ENCODE measurements at regions of chr17 and their contacts with region 1.

Region 1: GRCh38 chr17:78665952-78666920 is 89.0 kb upstream of the DNAH17 start:
- DNase-seq: peak; percentile 79 to 91 (median 87)
- H3K4me3 ChIP-seq: peak overlapping the region in 1 of 3 experiments; percentile 41
- H3K4me3 Mint-ChIP-seq: peak overlapping the region; percentile 52 to 74
- H3K27ac ChIP-seq: peak overlapping the region; percentile 77 to 84
- H3K27ac Mint-ChIP-seq: peak overlapping the region; percentile 83 to 97 (median 91)
- H3K4me1 ChIP-seq: peaks cover 29 to 31% of the 10 kb centered on the region in 2 donors
- H3K4me1 Mint-ChIP-seq: peaks cover 27% of the 10 kb centered on the region
- H3K27me3 ChIP-seq: no peaks in the 10 kb centered on the region
- H3K27me3 Mint-ChIP-seq: peaks cover 0 to 8% (median 5%) of the 10 kb centered on the region in 3 donors
- CTCF ChIP-seq: no peak

Region 2: GRCh38 chr17:78583091-78583490 is 83.1 kb before region 1 on chr17:
- intact Hi-C with region 1: no loop called
- DNase-seq: peak; percentile 21 to 56 (median 49)
- H3K4me3 ChIP-seq: no peak overlapping the region
- H3K4me3 Mint-ChIP-seq: no peak overlapping the region
- H3K27ac ChIP-seq: no peak overlapping the region
- H3K27ac Mint-ChIP-seq: peak overlapping the region in 3 of 7 donors; percentile 37 to 64 (median 37)
- H3K4me1 ChIP-seq: peaks cover 24 to 34% of the 10 kb centered on the region in 2 donors
- H3K4me1 Mint-ChIP-seq: peaks cover 42% of the 10 kb centered on the region
- H3K27me3 ChIP-seq: no peaks in the 10 kb centered on the region
- H3K27me3 Mint-ChIP-seq: peaks cover 2 to 9% (median 2%) of the 10 kb centered on the region in 3 donors
- CTCF ChIP-seq: no peak

Region 3: GRCh38 chr17:78598013-78598471 is 68.2 kb before region 1 on chr17:
- intact Hi-C with region 1: loop called in 1 of 2 experiments (anchors 10 kb)
- DNase-seq: peak; percentile 42 to 67 (median 55)
- H3K4me3 ChIP-seq: no peak overlapping the region
- H3K4me3 Mint-ChIP-seq: peak overlapping the region; percentile 34 to 74
- H3K27ac ChIP-seq: peak overlapping the region in 1 of 2 donors; percentile 55
- H3K27ac Mint-ChIP-seq: peak overlapping the region in 6 of 7 donors; percentile 62 to 88 (median 83)
- H3K4me1 ChIP-seq: peaks cover 29 to 37% of the 10 kb centered on the region in 2 donors
- H3K4me1 Mint-ChIP-seq: peaks cover 44% of the 10 kb centered on the region
- H3K27me3 ChIP-seq: no peaks in the 10 kb centered on the region
- H3K27me3 Mint-ChIP-seq: peaks cover 0 to 6% (median 5%) of the 10 kb centered on the region in 3 donors
- CTCF ChIP-seq: no peak